ENCODE measurements at regions of chr21 and their contacts with region 1.

Region 1: DNA sequence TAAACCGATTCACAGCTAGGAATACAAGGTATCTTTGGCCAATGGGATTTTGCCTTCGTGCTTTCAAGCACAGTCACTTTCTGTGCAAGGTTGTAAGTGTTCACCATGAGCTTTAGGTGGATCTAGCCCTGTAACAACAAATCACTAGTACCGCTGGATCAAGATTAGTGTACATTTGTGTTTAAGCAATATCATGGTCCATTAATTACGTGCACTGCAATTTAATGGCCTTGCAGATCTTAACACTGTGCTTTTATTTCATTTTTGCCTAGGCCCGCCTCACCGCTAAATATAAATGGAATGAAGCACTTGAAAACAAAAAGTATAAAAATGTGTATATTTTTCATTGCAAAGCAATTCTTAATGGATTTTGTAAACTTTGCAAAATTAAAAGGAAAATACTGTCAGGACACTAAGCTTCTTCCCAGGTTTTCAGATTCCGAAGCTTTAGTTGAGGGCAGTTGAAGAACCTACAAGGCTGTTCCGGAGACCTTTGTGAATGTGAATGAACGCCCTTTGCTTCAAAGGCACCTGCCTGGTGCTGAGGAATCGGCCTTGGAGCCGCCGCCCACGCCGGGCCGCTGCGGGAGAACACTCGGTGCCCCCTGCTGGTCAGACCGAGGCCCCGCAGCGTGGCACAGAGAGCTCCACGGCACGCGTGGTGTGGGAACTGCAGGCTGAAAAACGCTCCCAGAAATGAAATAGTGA is 460.9 kb downstream of the DSCAM start:
- H3K4me3 ChIP-seq: no peak overlapping the region
- H3K27ac ChIP-seq: no peak overlapping the region
- H3K4me1 ChIP-seq: no peaks in the 10 kb centered on the region
- CTCF ChIP-seq: no peak

Region 2: DNA sequence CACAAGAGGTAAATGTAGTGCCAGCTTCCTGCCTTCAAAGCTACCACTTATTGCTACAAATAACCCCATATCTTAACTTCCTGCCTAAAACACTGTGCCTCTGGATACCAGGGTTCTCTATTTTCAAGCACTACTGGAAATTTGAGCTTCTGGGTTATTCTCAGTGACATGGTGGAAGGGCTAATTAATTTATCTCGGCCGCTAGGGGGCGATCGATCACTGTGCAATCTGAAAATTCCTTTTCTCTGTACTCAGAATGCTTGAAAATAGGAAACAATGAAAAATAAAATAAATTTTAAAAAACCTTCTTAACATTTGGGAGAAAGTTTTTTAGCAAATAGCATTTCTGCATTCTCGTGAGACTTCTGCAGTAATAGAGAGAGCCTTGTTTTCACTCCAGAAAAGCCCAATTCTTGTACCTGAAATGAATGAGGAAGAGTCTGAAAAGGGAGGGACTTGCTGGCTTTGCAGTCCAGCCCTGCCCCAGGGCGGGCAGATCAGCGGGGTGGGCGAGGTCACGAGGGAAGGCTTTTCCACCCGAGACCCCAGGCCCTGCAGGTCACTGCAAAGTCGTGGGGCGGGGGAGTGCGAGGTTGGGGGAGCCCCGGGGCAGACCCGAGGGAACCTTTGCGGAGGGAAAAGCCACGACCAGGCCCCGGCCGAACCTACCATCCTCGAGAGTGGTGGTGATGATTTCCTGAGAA is 242.1 kb before region 1 on chr21:
- CTCF ChIA-PET with region 1: interaction called, 37 read pairs
- POLR2A ChIA-PET with region 1: no interaction called
- H3K4me3 ChIP-seq: no peak overlapping the region
- H3K27ac ChIP-seq: no peak overlapping the region
- H3K4me1 ChIP-seq: no peaks in the 10 kb centered on the region
- CTCF ChIP-seq: no peak

Region 3: GRCh38 chr21:40318434-40318833 is 67.6 kb before region 1 on chr21:
- CTCF ChIA-PET with region 1: no interaction called
- POLR2A ChIA-PET with region 1: no interaction called
- H3K4me3 ChIP-seq: no peak overlapping the region
- H3K27ac ChIP-seq: no peak overlapping the region
- H3K4me1 ChIP-seq: no peaks in the 10 kb centered on the region
- CTCF ChIP-seq: no peak

Region 4: DNA sequence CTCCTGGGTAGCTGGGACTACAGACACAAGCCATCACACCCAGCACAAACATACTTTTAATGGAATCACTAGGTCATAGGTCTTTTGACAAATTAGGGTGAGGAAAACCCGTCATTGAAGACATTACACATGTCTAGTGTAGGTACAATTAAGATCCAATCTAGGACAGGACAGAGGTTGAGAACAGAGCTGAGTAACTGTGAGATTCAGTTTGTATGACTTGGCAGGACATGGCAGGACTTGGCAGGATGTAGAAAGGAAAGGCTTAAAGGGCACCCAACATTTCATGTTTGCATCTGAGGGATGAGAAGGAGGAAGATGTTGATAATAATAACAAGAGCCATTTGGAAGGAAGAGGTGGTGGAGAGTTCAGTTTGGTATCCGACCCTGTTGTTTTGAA is 35.0 kb before region 1 on chr21:
- CTCF ChIA-PET with region 1: interaction called, 10 read pairs
- POLR2A ChIA-PET with region 1: no interaction called
- H3K4me3 ChIP-seq: no peak overlapping the region
- H3K27ac ChIP-seq: no peak overlapping the region
- H3K4me1 ChIP-seq: no peaks in the 10 kb centered on the region
- CTCF ChIP-seq: no peak

Region 5: DNA sequence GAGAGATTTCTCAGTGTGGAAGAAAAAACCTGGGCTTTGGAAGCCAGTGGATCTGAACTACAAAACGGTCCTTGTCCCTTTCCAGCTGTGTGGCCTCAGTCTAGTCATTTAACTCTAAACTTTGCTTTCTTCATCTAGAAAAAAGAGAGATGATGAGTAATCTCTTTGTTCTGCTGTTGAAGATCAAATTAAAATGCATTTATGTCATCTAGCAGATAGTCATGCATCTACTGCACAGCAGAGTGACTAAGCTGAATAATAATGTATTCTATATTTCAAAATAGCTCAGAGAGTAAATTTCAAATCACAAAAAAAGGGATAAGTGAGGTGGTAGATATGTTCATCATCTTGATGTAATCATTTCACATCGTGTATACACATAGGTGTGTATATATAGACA is 12.3 kb before region 1 on chr21:
- CTCF ChIA-PET with region 1: interaction called, 23 read pairs
- POLR2A ChIA-PET with region 1: no interaction called
- H3K4me3 ChIP-seq: no peak overlapping the region
- H3K27ac ChIP-seq: no peak overlapping the region
- H3K4me1 ChIP-seq: no peaks in the 10 kb centered on the region
- CTCF ChIP-seq: no peak

Region 6: DNA sequence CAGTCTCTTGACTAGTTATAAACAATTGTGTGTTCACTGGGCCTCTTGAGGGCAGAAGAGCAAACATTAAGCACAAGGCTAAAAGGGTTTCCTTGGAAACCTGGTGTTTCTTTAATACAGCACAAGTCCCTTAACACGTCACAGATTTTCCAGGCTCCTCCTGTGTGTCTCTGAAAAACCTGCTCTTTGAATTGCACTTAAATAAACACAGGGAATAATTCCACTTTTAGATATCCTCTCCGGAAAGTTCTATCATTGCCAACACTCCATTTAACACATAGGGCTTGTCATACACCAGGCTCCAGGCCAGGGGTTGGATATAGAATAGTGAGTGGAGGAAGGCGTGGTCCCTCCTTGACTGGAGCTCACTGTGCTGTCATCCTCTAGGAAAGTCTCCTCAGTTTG is 18.4 kb after region 1 on chr21:
- CTCF ChIA-PET with region 1: interaction called, 18 read pairs
- POLR2A ChIA-PET with region 1: no interaction called
- H3K4me3 ChIP-seq: no peak overlapping the region
- H3K27ac ChIP-seq: no peak overlapping the region
- H3K4me1 ChIP-seq: peaks cover 3% of the 10 kb centered on the region; the same call in 1 of the 2 replicates
- CTCF ChIP-seq: no peak

Region 7: DNA sequence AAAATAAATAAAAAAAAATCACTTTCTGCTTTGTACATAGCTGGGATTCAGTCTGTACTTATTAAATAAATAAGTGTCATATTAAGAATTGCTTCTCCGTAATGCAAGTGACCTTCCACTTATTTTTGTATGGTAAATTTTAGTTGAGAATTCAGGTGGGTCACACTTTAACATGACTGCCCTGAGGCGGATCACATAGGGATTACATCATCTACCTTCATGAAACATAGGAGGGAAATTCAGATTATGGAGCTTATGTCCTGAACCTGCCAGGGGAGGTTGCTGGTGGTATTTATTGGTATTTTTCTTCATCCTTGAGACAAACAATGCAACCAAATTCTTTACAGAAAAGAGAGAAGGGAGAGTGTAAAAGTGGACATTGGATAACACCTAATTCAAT is 396.7 kb after region 1 on chr21:
- CTCF ChIA-PET with region 1: no interaction called
- POLR2A ChIA-PET with region 1: no interaction called
- H3K4me3 ChIP-seq: no peak overlapping the region
- H3K27ac ChIP-seq: no peak overlapping the region
- H3K4me1 ChIP-seq: no peaks in the 10 kb centered on the region
- CTCF ChIP-seq: no peak